ENCODE measurements at regions of chr9 and their contacts with region 1.

Region 1: GRCh38 chr9:385818-386398 is 171.2 kb downstream of the DOCK8 start:
- DNase-seq: peak; percentile 53
- H3K4me3 ChIP-seq: no peak overlapping the region
- H3K27ac ChIP-seq: no peak overlapping the region
- H3K4me1 ChIP-seq: no peaks in the 10 kb centered on the region
- H3K27me3 ChIP-seq: no peaks in the 10 kb centered on the region
- CTCF ChIP-seq: peak; percentile 96 to 99

Region 2: DNA sequence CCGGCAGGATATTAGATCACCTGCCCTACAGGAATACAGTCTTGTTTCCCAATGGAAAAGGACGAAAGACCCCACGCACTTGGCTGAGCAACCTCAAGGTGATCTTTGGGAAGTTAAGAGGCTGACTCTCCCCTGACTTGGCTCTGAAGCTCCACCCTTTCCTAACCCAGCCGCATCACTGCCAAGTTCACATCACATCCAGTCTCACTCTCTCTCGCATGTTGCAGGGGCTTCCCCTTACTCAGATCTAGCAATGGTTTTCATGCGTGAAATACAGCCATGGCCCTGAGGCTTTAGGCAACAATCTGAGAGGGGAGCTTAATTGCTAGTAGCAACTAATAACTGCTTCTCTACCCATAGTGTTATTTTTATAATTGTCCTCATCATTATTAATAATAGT is 40.4 kb after region 1 on chr9:
- CTCF ChIA-PET with region 1: no interaction called
- dilution Hi-C with region 1: no loop called
- in situ Hi-C with region 1: no loop called
- intact Hi-C with region 1: no loop called
- DNase-seq: no peak
- H3K4me3 ChIP-seq: no peak overlapping the region
- H3K27ac ChIP-seq: no peak overlapping the region
- H3K4me1 ChIP-seq: no peaks in the 10 kb centered on the region
- H3K27me3 ChIP-seq: no peaks in the 10 kb centered on the region
- CTCF ChIP-seq: no peak

Region 3: DNA sequence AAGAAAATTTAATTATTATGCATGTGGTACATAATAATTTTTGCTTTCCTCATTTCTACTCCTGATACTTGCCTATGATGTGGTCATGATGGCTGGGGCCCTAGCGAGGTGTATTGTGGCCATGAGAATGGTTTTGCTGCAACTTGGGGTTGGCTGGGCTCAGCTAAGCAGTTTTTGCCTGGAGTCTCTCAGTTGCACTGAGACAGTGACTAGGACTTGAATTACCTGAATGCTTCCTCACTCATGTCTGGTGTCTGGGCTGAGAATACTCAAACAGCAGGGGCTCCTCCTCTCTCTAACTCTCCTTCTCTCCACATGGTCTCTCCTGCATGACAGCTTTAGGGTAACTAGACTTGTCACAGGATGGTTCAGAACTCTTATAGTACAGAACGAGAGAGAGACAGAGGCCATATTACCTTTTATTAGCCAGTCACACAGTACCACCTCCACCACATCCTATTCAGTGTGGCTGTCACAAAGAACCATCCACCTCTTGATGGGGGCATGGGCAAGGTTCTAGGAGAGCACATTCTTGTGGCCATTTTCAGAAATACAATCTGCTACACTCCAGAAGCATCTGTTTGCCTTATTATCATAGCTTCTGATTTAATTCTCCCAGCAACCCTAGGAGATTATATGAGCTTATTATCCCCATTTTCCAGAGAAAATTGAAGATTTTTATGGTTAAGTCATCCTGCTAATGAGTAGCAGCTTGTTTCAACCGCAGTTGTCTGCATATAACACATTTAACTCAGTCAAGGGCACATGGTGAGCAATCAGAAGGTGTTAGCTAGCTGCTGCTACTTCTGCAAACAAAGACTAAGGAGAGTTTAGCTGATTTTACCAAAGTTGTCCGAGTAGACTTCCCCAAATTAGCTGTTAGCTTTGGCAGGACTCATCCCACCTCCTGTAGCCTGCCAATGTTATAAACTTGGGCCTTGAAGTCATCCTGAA is 73.9 kb after region 1 on chr9:
- CTCF ChIA-PET with region 1: no interaction called
- dilution Hi-C with region 1: no loop called
- in situ Hi-C with region 1: no loop called
- intact Hi-C with region 1: loop called (anchors 5 kb)
- DNase-seq: no peak
- H3K4me3 ChIP-seq: no peak overlapping the region
- H3K27ac ChIP-seq: no peak overlapping the region
- H3K4me1 ChIP-seq: no peaks in the 10 kb centered on the region
- H3K27me3 ChIP-seq: no peaks in the 10 kb centered on the region
- CTCF ChIP-seq: no peak

Region 4: DNA sequence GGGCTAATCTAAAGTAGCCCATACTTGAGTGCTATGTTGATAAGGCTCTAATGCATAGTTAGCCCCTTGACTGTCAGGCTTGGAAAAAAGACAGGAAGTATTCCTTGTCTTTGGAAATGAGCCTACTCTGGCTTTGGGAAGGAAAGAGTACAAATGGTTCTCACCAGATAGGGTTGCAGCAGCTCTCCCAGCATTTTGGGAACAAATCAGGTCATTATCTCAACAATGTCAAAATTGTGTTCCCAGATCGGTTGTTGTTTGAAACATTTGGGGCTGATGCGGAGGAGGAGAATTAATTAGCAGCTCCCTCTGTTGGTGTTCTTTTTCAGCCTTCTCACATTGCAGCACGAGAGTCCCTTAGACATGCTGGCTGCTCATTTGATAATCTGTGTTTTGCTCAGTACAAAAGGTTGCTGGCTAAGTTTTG is 160.9 kb after region 1 on chr9:
- CTCF ChIA-PET with region 1: no interaction called
- dilution Hi-C with region 1: no loop called
- in situ Hi-C with region 1: no loop called
- intact Hi-C with region 1: loop called (anchors 5 kb)
- DNase-seq: no peak
- H3K4me3 ChIP-seq: no peak overlapping the region
- H3K27ac ChIP-seq: no peak overlapping the region
- H3K4me1 ChIP-seq: peaks cover 11% of the 10 kb centered on the region
- H3K27me3 ChIP-seq: no peaks in the 10 kb centered on the region
- CTCF ChIP-seq: peak in 1 of 2 donors; percentile 42

Region 5: GRCh38 chr9:757246-757881 is 371.5 kb after region 1 on chr9:
- CTCF ChIA-PET with region 1: no interaction called
- dilution Hi-C with region 1: no loop called
- in situ Hi-C with region 1: loop called in 1 of 2 experiments (anchors 10 kb)
- intact Hi-C with region 1: loop called (anchors 2 kb)
- DNase-seq: peak; percentile 51
- H3K4me3 ChIP-seq: no peak overlapping the region
- H3K27ac ChIP-seq: no peak overlapping the region
- H3K4me1 ChIP-seq: peaks cover 25% of the 10 kb centered on the region
- H3K27me3 ChIP-seq: no peaks in the 10 kb centered on the region
- CTCF ChIP-seq: peak; percentile 46 to 74

Region 6: GRCh38 chr9:806285-807156 is 420.6 kb after region 1 on chr9:
- CTCF ChIA-PET with region 1: no interaction called
- dilution Hi-C with region 1: no loop called
- in situ Hi-C with region 1: no loop called
- intact Hi-C with region 1: loop called (anchors 1 kb)
- DNase-seq: peak; percentile 24
- H3K4me3 ChIP-seq: no peak overlapping the region
- H3K27ac ChIP-seq: no peak overlapping the region
- H3K4me1 ChIP-seq: peaks cover 10% of the 10 kb centered on the region
- H3K27me3 ChIP-seq: no peaks in the 10 kb centered on the region
- CTCF ChIP-seq: peak; percentile 73 to 76